HEK293 (cell line): ENCODE measurements at regions of chr5 and their contacts with region 1.

Region 1: DNA sequence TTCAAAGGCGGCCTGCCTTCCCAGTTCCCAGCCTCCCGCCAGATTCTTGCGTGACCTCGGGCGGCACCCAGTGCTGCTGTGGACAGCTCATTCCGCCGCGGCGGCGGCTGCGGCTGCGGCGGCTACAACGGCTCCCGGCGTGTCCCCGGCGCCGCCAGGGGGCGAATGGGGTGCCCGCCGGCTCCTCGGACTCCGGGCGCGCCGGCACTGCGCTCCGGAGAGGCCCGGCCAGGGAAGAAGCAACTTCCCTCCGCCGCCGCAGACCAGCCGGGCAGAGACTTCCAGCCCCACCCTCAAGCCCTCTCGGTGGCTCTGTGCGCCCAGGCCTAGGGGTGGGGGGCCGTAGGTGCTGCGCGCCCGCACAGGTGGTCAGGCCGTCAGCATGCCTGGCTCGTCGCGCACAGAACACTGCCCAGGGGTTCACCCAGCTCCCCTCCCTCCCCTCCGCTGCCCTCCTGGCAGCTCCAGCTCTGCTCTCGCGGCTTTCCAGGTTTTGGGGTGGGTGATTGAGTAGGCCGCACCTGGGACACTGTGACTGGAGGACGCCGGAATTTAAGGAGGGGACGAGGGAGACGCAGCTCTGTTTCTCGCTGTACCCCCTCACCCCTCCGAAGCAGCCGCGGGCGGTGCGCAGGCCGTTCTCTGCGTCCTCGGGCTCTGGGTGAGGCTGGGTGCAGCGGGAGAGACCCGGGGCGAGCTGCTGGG is 20.2 kb downstream of the IGIP start:
- H3K4me3 ChIP-seq: peak overlapping the region; percentile 8; the same call in 1 of the 2 replicates
- H3K27ac ChIP-seq: no peak overlapping the region
- H3K4me1 ChIP-seq: no peaks in the 10 kb centered on the region
- CTCF ChIP-seq: no peak

Region 2: GRCh38 chr5:140035881-140036280 is 110.1 kb before region 1 on chr5:
- CTCF ChIA-PET with region 1: no interaction called
- POLR2A ChIA-PET with region 1: no interaction called
- H3K4me3 ChIP-seq: no peak overlapping the region
- H3K27ac ChIP-seq: no peak overlapping the region
- H3K4me1 ChIP-seq: peaks cover 21% of the 10 kb centered on the region
- CTCF ChIP-seq: no peak

Region 3: GRCh38 chr5:140073296-140073695 is 72.7 kb before region 1 on chr5:
- CTCF ChIA-PET with region 1: interaction called, 109 read pairs
- POLR2A ChIA-PET with region 1: no interaction called
- H3K4me3 ChIP-seq: no peak overlapping the region
- H3K27ac ChIP-seq: no peak overlapping the region
- H3K4me1 ChIP-seq: no peaks in the 10 kb centered on the region
- CTCF ChIP-seq: no peak; the same call in 1 of the 2 replicates

Region 4: GRCh38 chr5:140081030-140081429 is 64.9 kb before region 1 on chr5:
- CTCF ChIA-PET with region 1: interaction called, 109 read pairs
- POLR2A ChIA-PET with region 1: interaction called, 3 read pairs
- H3K4me3 ChIP-seq: no peak overlapping the region
- H3K27ac ChIP-seq: no peak overlapping the region
- H3K4me1 ChIP-seq: no peaks in the 10 kb centered on the region
- CTCF ChIP-seq: no peak

Region 5: DNA sequence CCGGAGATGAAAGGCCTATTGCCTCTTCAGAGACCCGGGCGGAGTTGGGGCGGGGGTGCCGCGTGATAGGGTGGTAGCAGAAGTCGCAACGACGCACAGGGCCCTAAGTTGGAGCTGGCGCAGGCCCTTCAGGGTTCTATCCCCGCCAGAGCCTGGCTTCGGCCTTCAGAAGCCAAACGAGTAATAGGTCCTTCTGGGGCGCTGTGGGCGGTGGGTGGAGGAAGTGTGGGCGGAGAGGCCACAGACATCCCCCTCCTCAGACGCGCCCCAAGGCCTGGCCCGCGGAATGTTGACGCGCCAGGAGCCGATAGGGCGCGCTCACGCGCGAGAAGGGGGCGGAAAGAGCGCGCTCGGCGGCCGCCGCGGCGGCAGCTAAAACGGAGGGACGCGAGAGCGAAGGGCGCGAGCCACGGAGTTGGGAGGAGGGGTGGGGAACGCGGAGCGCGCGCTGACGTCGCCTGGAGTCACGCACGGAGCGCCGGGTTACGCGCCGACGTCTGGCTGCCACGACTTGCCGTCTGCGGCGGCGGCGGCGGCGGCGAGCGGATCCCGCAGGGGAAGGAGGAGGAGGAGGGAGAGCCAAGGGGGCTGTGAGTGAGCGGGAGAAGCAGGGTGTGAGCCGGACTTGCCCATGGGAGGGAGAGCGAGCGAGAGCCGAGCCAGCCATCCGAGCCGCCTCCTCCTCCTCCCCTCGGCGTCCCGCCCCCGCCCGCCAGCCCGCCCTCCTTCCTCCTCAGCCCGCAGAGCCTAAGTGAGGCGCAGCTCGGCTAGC is 38.5 kb before region 1 on chr5:
- CTCF ChIA-PET with region 1: interaction called, 68 read pairs
- POLR2A ChIA-PET with region 1: no interaction called
- H3K4me3 ChIP-seq: peak overlapping the region; percentile 85
- H3K27ac ChIP-seq: peak overlapping the region; percentile 92
- H3K4me1 ChIP-seq: peaks cover 19% of the 10 kb centered on the region
- CTCF ChIP-seq: peak; percentile 90

Region 6: GRCh38 chr5:140113699-140114263 is 32.2 kb before region 1 on chr5 and contains the start of gene PURA:
- CTCF ChIA-PET with region 1: interaction called, 68 read pairs
- POLR2A ChIA-PET with region 1: interaction called, 5 read pairs
- H3K4me3 ChIP-seq: peak within 1 kb of the TSS; percentile 72
- H3K27ac ChIP-seq: peak within 1 kb of the TSS; percentile 97
- H3K4me1 ChIP-seq: peaks cover 36% of the 10 kb centered on the region
- CTCF ChIP-seq: peak; percentile 90

Region 7: DNA sequence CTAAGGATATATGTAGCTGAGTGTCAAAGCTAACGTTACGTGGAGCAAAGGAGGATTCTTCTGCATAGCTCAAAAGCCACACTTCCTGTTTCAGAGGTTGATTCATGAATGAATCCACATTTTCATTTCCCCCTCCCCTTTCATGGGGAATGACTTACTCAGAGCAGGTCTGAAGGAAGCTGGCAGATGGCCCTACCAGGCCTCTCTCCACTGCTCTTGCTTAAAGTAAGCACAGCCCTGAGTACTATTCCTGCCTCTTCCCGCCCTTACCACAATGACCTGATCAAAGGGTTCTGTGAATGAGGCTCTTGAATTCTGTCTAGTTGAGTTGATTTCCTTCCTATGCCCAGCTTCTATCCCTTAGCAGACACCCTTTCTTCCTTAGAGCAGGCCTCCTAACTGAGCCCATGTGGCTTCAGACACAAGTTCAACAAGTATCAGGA is 14.0 kb before region 1 on chr5:
- CTCF ChIA-PET with region 1: interaction called, 35 read pairs
- POLR2A ChIA-PET with region 1: no interaction called
- H3K4me3 ChIP-seq: no peak overlapping the region
- H3K27ac ChIP-seq: no peak overlapping the region
- H3K4me1 ChIP-seq: no peaks in the 10 kb centered on the region; the same call in 1 of the 2 replicates
- CTCF ChIP-seq: no peak

Region 8: DNA sequence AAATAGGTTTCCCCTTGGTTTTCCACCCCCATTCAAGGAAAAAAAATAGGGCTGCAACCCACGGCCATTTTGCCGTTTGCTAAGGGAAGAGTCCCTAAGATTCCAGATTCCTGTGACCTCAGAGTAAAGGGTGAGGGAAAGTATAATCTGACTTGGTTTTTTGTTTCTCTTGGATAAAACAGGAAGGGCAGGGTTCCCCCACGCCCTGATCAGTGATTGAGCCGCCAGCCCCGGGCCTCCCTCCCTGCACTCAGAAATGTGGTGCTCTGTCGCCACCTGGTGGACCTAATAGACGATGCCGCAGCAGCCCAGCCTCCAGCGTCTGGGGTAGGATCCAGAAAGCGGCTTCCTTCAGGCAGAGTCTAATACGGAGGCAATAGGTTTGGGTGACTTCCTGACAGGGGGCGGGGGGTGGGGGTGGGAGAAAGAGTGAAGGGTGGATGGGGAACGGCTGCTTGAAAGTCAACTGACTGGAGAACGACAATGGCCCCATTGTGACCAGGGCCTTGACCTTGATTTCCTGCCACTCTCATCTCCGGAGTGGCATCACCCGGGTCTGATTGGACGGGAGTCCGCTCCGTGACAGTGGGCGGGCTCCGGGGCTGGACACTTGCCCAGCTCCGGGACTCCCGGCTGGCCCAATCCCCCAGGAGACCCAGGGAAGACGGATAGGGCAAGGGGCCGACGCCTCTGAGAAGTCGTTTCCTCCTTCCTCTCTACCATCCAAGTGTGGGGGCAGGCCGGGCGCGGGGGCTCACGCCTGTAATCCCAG is 11.2 kb after region 1 on chr5:
- CTCF ChIA-PET with region 1: interaction called, 52 read pairs
- POLR2A ChIA-PET with region 1: no interaction called
- H3K4me3 ChIP-seq: peak overlapping the region; percentile 35
- H3K27ac ChIP-seq: peak overlapping the region; percentile 25; the same call in 1 of the 2 replicates
- H3K4me1 ChIP-seq: no peaks in the 10 kb centered on the region
- CTCF ChIP-seq: peak; percentile 78

Region 9: GRCh38 chr5:140764177-140765020 is 618.4 kb after region 1 on chr5:
- CTCF ChIA-PET with region 1: no interaction called
- POLR2A ChIA-PET with region 1: no interaction called
- H3K4me3 ChIP-seq: no peak overlapping the region
- H3K27ac ChIP-seq: no peak overlapping the region
- H3K4me1 ChIP-seq: no peaks in the 10 kb centered on the region
- CTCF ChIP-seq: no peak